Calu3 (cell line): ENCODE measurements at regions of chr13 and their contacts with region 1.

Region 1: DNA sequence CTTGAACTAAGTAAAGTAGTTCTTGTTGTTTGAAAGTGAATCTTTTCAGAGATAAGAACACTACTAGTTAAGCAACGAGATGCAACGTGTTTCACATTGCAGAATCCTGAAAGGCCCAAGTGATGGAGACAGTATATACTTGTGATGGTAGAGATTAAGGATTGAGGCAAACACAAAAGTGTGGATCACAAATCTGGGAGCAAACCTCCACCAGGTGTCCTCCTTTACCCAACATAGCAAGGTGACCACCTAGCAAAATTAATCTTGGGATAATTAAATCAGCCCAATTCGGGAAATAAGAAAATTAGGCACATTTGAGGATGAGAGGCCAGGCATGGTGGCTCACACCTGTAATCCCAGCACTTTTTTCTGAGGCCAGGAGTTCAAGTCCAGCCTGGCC is 563.9 kb downstream of the DACH1 start:
- DNase-seq: peak; percentile 2
- H3K4me3 Mint-ChIP-seq: no peak overlapping the region
- H3K27ac Mint-ChIP-seq: no peak overlapping the region
- H3K4me1 Mint-ChIP-seq: no peaks in the 10 kb centered on the region
- H3K27me3 Mint-ChIP-seq: no peaks in the 10 kb centered on the region
- CTCF ChIP-seq: no peak

Region 2: DNA sequence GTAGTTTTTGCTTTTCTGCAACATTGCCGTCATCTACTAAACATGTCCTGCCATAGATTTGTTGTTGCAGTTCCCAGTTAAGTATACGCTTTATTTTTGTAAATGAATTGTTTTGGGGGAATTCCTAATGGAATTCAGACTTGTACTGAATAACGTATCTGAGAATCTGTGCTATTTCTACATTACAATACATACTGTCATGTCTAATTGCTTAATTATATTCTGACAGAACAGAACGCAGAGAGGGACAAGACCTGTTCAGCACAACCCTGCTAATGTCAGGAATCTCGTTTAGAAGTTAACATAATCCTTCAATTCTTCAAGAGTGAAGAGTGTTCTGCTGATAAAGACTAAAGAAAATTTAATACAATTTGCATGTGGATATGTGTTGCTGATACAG is 333.8 kb before region 1 on chr13:
- CTCF ChIA-PET with region 1: no interaction called
- intact Hi-C with region 1: no loop called
- DNase-seq: no peak
- H3K4me3 Mint-ChIP-seq: no peak overlapping the region
- H3K27ac Mint-ChIP-seq: no peak overlapping the region
- H3K4me1 Mint-ChIP-seq: no peaks in the 10 kb centered on the region
- H3K27me3 Mint-ChIP-seq: no peaks in the 10 kb centered on the region
- CTCF ChIP-seq: no peak

Region 3: DNA sequence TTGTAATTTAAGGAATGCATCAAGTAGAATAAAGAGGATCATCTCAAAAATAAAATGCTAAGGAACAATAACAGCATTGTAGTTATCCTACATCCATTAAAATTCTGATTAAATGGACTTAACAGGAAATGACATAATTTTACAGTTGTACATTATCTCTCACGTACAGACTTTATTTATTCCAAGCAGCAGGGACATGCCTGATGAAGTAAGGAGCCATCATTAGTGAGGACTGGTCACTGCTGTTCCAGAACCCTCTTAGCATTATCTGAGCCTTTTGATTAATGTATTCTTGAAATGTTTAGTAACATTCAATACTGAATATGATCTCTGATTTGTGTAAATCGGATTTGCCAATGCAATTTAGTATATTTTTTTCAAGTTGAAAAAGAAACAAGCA is 47.7 kb after region 1 on chr13:
- CTCF ChIA-PET with region 1: no interaction called
- intact Hi-C with region 1: no loop called
- DNase-seq: no peak
- H3K4me3 Mint-ChIP-seq: no peak overlapping the region
- H3K27ac Mint-ChIP-seq: no peak overlapping the region
- H3K4me1 Mint-ChIP-seq: peaks cover 2% of the 10 kb centered on the region
- H3K27me3 Mint-ChIP-seq: no peaks in the 10 kb centered on the region
- CTCF ChIP-seq: no peak

Region 4: DNA sequence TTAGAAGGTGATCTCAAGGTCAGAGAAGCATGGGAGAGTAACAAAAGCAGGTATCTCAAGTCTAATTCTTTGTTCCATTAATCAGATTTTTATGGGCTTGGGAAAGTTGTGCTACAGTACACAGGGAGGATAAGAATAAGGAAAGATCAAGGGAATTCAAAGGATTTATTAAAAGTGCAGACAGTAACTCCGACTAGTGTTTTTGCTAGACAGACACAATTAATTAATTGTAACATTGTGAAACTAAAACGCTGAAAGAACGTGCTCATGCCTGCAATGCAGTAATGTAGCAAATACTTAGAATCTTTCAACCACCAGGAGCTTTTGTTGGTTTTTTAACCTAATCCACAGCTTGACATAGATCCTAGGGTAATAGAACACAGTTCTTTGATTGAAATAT is 342.3 kb after region 1 on chr13:
- CTCF ChIA-PET with region 1: no interaction called
- intact Hi-C with region 1: no loop called
- DNase-seq: no peak
- H3K4me3 Mint-ChIP-seq: no peak overlapping the region
- H3K27ac Mint-ChIP-seq: no peak overlapping the region
- H3K4me1 Mint-ChIP-seq: no peaks in the 10 kb centered on the region
- H3K27me3 Mint-ChIP-seq: no peaks in the 10 kb centered on the region
- CTCF ChIP-seq: no peak

Region 5: DNA sequence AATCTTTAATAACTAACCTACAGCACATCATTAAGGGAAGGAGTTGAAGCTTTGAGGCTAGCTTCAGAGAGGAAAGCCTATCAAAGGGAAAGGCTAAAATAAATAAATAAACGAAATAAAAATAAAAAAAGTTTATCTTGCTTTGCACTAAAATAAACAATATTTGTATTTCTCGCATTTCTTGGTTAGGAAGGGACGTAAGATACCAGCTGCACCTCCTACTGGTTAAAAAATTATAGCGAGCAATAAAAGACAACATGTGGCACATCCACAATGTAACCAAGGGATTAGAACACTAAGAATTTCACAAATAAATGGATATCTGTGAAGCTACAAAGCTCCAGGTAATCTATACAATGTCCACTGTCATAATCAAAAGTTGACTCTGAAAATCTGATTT is 369.4 kb after region 1 on chr13:
- CTCF ChIA-PET with region 1: no interaction called
- intact Hi-C with region 1: no loop called
- DNase-seq: no peak
- H3K4me3 Mint-ChIP-seq: no peak overlapping the region
- H3K27ac Mint-ChIP-seq: no peak overlapping the region
- H3K4me1 Mint-ChIP-seq: no peaks in the 10 kb centered on the region
- H3K27me3 Mint-ChIP-seq: no peaks in the 10 kb centered on the region
- CTCF ChIP-seq: no peak

Region 6: GRCh38 chr13:71879129-71879535 is 576.0 kb after region 1 on chr13:
- CTCF ChIA-PET with region 1: no interaction called
- intact Hi-C with region 1: loop called (anchors 5 kb)
- DNase-seq: no peak
- H3K4me3 Mint-ChIP-seq: no peak overlapping the region
- H3K27ac Mint-ChIP-seq: no peak overlapping the region
- H3K4me1 Mint-ChIP-seq: peaks cover 10% of the 10 kb centered on the region
- H3K27me3 Mint-ChIP-seq: no peaks in the 10 kb centered on the region
- CTCF ChIP-seq: no peak

Region 7: GRCh38 chr13:71979616-71980015 is 676.5 kb after region 1 on chr13:
- CTCF ChIA-PET with region 1: no interaction called
- intact Hi-C with region 1: loop called (anchors 10 kb)
- DNase-seq: no peak
- H3K4me3 Mint-ChIP-seq: no peak overlapping the region
- H3K27ac Mint-ChIP-seq: no peak overlapping the region
- H3K4me1 Mint-ChIP-seq: no peaks in the 10 kb centered on the region
- H3K27me3 Mint-ChIP-seq: no peaks in the 10 kb centered on the region
- CTCF ChIP-seq: no peak

Region 8: GRCh38 chr13:72565893-72566292 is 1262.7 kb after region 1 on chr13:
- CTCF ChIA-PET with region 1: no interaction called
- intact Hi-C with region 1: loop called (anchors 10 kb)
- DNase-seq: no peak
- H3K4me3 Mint-ChIP-seq: no peak overlapping the region
- H3K27ac Mint-ChIP-seq: no peak overlapping the region
- H3K4me1 Mint-ChIP-seq: no peaks in the 10 kb centered on the region
- H3K27me3 Mint-ChIP-seq: no peaks in the 10 kb centered on the region
- CTCF ChIP-seq: no peak